ENCODE measurements at regions of chrX and their contacts with region 1.

Region 1: DNA sequence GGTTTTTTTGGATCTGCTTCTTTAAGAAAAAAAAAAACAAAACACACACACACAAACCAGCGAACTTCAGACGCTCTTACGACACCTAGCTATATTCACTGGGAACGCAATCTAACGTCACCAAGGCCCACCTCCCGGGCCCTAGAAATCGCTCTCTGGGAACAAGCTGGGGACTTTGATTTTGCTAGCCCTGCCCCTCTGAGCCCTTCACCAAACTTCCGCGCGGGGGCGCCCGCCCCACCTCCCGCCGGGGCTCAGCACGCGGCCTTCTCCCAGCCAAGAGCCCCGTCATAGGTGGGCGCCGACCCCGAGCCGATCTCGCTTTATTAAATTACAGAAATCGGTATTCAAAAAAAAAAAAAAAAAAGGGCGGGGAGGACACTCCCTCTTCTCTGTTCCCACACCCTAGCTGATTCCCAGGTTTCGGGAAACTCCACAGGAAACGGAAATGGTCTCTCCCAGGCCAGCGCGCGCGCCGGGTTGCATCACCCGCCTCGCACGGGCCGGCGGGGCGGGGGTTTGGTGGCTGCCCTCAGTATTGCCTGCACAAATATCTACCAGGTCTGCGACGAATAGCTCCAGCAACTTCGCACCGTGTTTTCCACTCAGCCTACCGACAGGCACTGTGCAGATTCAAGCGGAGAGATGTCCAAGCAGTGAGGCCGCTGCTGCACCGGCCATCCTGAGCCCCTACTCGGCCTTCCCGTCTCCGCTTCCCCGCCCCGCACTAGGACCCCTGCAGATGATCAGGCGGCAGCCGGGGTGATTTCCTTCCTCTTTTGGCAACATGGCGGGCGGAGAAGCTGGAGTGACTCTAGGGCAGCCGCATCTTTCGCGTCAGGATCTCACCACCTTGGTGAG is at the start of gene EIF2S3:
- DNase-seq: peak; percentile 87
- H3K4me3 Mint-ChIP-seq: no peak within 1 kb of the TSS
- H3K27ac Mint-ChIP-seq: no peak within 1 kb of the TSS
- H3K4me1 Mint-ChIP-seq: peaks cover 10% of the 10 kb centered on the region
- H3K27me3 Mint-ChIP-seq: no peaks in the 10 kb centered on the region
- total RNA-seq, gene EIF2S3: 366 to 386 TPM

Region 2: DNA sequence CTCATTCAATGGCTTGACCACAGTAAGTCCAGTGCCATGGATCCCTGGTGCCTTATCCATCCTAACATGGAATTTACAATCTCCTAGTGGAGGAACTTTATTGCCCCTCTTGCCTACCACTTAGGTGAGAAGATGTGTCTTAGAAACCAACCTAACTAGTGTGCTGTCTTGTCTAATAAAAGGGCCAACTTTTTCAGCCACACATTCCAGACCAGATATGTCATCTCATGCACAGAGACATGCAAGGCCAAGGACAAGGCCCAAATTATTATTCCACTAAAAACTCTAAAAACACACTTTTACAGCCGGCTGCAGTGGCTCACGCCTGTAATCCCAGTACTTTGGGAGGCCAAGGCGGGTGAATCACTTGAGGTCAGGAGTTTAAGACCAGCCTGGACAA is 397.7 kb before region 1 on chrX:
- CTCF ChIA-PET with region 1: no interaction called
- intact Hi-C with region 1: no loop called
- DNase-seq: no peak
- H3K4me3 Mint-ChIP-seq: no peak overlapping the region
- H3K27ac Mint-ChIP-seq: no peak overlapping the region
- H3K4me1 Mint-ChIP-seq: peaks cover 16% of the 10 kb centered on the region
- H3K27me3 Mint-ChIP-seq: no peaks in the 10 kb centered on the region

Region 3: DNA sequence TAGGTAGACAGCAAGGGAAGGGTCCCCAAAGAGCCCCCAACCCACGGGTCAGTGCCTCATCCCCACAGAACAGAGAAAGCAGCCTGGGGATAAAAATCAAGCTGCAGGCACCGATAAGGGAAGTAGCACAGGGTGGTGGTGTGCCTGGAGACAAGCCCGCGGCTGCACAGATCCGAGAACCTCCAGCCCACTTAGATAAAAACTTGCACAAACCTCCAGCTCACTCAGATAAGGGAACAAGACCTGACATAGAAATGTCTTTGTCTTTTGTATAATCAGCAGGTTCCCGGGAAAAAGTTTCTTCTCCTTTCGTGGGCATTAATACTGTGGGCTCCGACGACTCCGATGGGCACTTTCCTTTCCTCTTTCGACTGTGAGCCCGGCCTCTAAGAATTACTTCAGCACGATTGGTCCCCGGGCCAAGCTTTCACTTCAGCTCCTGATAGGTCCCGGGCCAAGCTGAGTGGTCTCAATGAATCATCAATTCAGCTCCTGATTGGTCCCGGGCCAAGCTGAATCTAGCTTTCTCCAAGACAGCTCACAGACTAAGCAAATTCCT is 354.7 kb before region 1 on chrX:
- CTCF ChIA-PET with region 1: interaction called, 5 read pairs
- intact Hi-C with region 1: loop called (anchors 1 kb)
- DNase-seq: peak; percentile 28
- H3K4me3 Mint-ChIP-seq: peak overlapping the region; percentile 53
- H3K27ac Mint-ChIP-seq: no peak overlapping the region
- H3K4me1 Mint-ChIP-seq: peaks cover 6% of the 10 kb centered on the region
- H3K27me3 Mint-ChIP-seq: no peaks in the 10 kb centered on the region

Region 4: GRCh38 chrX:23871905-23872546 is 182.4 kb before region 1 on chrX:
- CTCF ChIA-PET with region 1: no interaction called
- intact Hi-C with region 1: no loop called
- DNase-seq: no peak
- H3K4me3 Mint-ChIP-seq: no peak overlapping the region
- H3K27ac Mint-ChIP-seq: no peak overlapping the region
- H3K4me1 Mint-ChIP-seq: no peaks in the 10 kb centered on the region
- H3K27me3 Mint-ChIP-seq: no peaks in the 10 kb centered on the region

Region 5: DNA sequence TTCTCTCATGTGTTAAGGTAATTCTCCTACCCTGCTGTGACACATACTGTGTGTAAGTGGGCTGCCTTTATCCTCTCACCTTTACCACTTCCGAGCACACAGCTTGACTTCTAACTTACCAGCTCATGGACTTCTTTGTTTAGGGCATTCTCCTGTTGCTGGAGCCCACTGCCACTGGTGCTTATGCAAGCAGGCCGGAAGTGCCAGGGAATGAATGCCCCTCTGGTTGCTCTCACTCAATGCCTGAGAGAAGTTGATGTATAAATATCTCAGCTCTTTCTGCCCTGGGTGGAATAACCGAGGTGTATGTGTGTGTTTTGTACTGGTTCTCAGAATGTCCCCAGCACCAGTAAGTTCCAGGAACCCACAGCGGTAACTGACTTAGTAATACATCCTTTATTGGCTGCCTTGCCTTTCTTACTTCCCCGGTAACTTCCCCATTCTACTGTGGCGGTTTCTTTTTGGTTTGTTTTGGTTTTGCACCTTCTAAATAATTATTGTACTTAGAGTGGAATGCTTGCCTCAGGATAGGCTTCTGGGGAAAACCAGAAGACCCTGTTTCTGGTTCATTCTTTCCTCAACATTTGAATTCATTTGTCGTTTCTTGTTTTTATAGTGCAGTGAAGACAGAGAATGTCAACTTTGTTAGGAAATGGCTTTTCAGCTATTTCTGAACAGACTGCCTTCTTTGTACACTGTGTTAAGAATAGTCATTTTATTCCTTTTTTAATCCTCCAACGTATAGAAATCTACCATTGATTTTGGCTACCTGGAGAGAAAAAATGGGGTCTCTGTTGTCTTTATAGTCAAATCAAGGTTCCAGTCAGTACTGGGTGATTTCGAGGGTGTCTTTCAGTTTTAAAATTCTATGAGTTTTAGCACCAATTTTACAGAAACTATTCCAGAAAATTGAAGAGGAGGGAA is 101.2 kb before region 1 on chrX:
- CTCF ChIA-PET with region 1: interaction called, 6 read pairs
- intact Hi-C with region 1: loop called (anchors 1 kb)
- DNase-seq: peak; percentile 70
- H3K4me3 Mint-ChIP-seq: peak overlapping the region; percentile 79
- H3K27ac Mint-ChIP-seq: peak overlapping the region; percentile 97
- H3K4me1 Mint-ChIP-seq: peaks cover 16% of the 10 kb centered on the region
- H3K27me3 Mint-ChIP-seq: no peaks in the 10 kb centered on the region